ENCODE measurements at regions of chr4 and their contacts with region 1.

Region 1: DNA sequence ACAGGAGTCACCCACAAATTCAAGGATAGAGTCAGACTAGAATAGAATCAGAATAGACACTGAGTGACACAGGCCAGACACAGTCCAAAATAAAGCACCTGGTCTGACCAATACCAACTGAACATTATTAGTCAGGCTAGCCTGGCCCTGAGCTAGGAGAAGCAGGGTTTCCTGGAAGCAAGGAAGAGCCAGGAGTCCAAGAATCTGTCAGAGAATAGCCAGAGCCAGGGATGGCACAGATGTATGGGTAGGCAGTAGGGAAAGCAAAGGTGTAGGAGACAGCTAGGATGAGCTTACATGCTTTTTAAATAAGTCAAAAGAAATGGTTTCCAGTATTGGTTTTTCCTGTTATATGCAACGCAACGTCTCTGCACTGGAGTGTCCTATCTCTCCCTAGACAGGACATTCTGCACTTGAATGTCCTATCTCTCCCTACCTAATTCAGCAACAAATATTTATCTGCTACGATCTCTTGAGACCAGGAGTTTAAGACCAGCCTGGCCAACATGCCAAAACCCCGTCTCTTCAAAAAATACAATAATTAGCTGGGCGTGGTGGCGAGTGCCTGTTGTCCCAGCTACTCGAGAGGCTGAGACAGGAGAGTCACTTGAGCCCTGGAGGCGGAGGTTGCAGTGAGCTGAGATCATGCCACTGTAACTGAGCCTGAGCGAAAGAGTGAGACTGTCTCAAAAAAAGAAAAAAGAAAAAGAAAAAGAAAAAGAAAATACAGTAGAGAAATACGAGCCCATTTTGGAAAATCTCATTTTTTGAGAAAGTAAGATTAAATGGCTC is 3.5 kb downstream of the BTC start:
- DNase-seq: no peak
- ATAC-seq: no peak
- H3K4me3 ChIP-seq: no peak overlapping the region
- H3K27ac ChIP-seq: no peak overlapping the region
- H3K4me1 ChIP-seq: no peaks in the 10 kb centered on the region
- H3K27me3 ChIP-seq: peaks cover 31% of the 10 kb centered on the region
- CTCF ChIP-seq: no peak
- POLR2A ChIP-seq: no peak
- RAD21 ChIP-seq: no peak

Region 2: DNA sequence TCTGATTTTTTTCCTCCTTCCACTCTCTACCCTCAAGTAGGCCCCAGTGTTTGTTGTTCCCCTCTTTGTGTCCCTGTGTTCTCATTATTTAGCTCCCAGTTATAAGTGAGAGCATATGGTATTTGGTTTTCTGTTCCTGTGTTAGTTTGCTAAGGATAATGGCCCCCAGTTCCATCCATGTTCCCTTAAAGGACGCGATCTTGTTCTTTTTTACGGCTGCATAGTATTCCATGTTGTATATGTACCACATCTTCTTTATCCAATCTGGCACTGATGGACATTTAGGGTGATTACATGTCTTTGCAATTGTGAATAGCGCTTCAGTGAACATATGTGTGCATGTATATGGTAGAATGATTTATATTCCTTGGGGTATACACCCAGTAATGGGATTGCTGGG is 57.9 kb after region 1 on chr4:
- CTCF ChIA-PET with region 1: no interaction called
- POLR2A ChIA-PET with region 1: no interaction called
- dilution Hi-C with region 1: no loop called
- in situ Hi-C with region 1: no loop called
- intact Hi-C with region 1: loop called (anchors 1 kb)
- DNase-seq: no peak
- ATAC-seq: no peak
- H3K4me3 ChIP-seq: no peak overlapping the region
- H3K27ac ChIP-seq: no peak overlapping the region
- H3K4me1 ChIP-seq: no peaks in the 10 kb centered on the region
- H3K27me3 ChIP-seq: no peaks in the 10 kb centered on the region
- CTCF ChIP-seq: no peak
- POLR2A ChIP-seq: no peak
- RAD21 ChIP-seq: no peak

Measured in IMR-90 (cell line).